H1 (cell line): ENCODE measurements at regions of chr15 and their contacts with region 1.

Region 1: DNA sequence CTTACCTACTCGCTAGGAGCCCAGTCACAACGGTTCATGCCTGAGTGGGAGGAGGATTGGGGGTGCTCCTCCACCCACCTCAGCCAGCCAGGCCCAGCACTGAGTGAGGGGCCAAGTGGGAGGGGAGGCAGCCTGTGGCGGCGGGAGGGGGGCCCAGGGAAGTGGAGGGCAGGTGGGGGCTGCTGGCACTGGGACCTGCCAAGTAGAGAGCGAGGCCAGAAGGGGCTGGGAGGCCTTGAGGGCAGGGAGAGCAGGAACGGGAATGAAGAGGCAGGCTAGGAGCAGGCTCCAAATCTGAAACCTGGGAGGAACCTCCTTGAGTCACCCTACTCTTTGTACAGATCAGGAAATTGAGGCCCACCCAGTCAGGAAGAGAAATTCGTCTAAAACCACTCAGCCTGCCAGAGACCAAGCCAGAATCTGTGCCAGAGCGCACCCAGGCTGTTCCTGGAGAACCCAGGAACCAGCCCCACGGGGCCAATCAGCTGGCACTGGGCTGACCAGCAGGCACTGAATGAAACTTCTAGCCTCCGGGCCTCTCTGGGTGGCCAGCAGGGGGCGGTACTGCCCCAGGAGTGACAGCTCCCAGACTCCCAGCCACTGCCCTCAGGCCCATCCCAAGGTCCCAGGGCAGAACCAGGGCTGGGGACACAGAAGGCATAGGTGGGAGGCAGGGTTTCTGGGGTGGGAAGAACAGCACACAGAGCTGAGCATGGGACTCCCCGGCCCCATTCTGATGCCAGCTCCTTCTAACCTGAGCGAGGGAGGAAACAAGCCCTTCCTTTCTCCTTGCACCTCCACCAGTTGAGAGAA is 14.8 kb upstream of the CYP11A1 start:
- DNase-seq: peak; percentile 78 to 96
- H3K4me3 ChIP-seq: no peak overlapping the region
- H3K27ac ChIP-seq: no peak overlapping the region
- H3K4me1 ChIP-seq: peaks cover 0 to 18% (median 11%) of the 10 kb centered on the region in 4 experiments; a peak in 5 of 7 replicates
- H3K27me3 ChIP-seq: no peaks in the 10 kb centered on the region
- CTCF ChIP-seq: peak; percentile 85 to 98 (median 94)
- EP300 ChIP-seq: no peak
- POLR2A ChIP-seq: no peak
- RAD21 ChIP-seq: peak; percentile 98 to 100

Region 2: GRCh38 chr15:74396445-74397238 is 14.4 kb after region 1 on chr15:
- CTCF ChIA-PET with region 1: interaction called, 19 read pairs
- POLR2A ChIA-PET with region 1: interaction called, 3 read pairs
- DNase-seq: no peak
- H3K4me3 ChIP-seq: no peak overlapping the region
- H3K27ac ChIP-seq: no peak overlapping the region
- H3K4me1 ChIP-seq: peaks cover 0 to 12% (median 7%) of the 10 kb centered on the region in 4 experiments; a peak in 4 of 7 replicates
- H3K27me3 ChIP-seq: no peaks in the 10 kb centered on the region
- CTCF ChIP-seq: no peak
- EP300 ChIP-seq: no peak
- POLR2A ChIP-seq: no peak
- RAD21 ChIP-seq: no peak

Region 3: GRCh38 chr15:74489518-74490338 is 107.5 kb after region 1 on chr15:
- CTCF ChIA-PET with region 1: interaction called, 63 read pairs
- POLR2A ChIA-PET with region 1: interaction called, 4 read pairs
- DNase-seq: peak; percentile 41 to 86
- H3K4me3 ChIP-seq: peak overlapping the region in 1 of 4 experiments; percentile 26; a peak in 1 of 8 replicates
- H3K27ac ChIP-seq: no peak overlapping the region
- H3K4me1 ChIP-seq: peaks cover 0 to 4% (median 4%) of the 10 kb centered on the region in 4 experiments; a peak in 5 of 7 replicates
- H3K27me3 ChIP-seq: no peaks in the 10 kb centered on the region
- CTCF ChIP-seq: peak; percentile 72 to 87 (median 76)
- EP300 ChIP-seq: no peak
- POLR2A ChIP-seq: peak in 1 of 2 experiments; percentile 39; a peak in 1 of 3 replicates
- RAD21 ChIP-seq: peak; percentile 68 to 72